CD8-positive, alpha-beta memory T cell (primary cell): ENCODE measurements at regions of chr7 and their contacts with region 1.

Region 1: DNA sequence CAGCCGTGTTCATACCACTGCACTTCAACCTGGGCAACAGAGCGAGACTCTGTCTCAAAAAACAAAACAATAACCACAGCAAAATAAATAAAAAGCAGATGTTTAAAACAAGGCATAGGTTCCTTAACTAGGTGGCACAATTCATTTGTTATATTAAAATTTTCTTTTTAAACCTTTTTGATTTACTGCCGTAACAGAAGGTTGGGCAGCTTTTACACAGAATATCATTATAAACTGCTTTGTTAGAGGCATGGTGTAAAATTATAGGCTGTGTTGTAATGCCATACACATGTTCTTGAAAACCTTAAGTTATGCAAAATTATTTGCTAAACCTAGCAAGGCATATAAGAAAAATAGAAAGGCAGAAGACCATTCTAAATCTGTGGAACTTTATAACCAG is 84.4 kb downstream of the MKLN1 start:
- DNase-seq: no peak
- H3K4me3 ChIP-seq: no peak overlapping the region
- H3K4me3 Mint-ChIP-seq: no peak overlapping the region
- H3K27ac ChIP-seq: no peak overlapping the region
- H3K27ac Mint-ChIP-seq: no peak overlapping the region
- H3K4me1 ChIP-seq: no peaks in the 10 kb centered on the region
- H3K4me1 Mint-ChIP-seq: peaks cover 4 to 16% (median 8%) of the 10 kb centered on the region in 3 donors
- H3K27me3 ChIP-seq: no peaks in the 10 kb centered on the region
- H3K27me3 Mint-ChIP-seq: no peaks in the 10 kb centered on the region

Region 2: DNA sequence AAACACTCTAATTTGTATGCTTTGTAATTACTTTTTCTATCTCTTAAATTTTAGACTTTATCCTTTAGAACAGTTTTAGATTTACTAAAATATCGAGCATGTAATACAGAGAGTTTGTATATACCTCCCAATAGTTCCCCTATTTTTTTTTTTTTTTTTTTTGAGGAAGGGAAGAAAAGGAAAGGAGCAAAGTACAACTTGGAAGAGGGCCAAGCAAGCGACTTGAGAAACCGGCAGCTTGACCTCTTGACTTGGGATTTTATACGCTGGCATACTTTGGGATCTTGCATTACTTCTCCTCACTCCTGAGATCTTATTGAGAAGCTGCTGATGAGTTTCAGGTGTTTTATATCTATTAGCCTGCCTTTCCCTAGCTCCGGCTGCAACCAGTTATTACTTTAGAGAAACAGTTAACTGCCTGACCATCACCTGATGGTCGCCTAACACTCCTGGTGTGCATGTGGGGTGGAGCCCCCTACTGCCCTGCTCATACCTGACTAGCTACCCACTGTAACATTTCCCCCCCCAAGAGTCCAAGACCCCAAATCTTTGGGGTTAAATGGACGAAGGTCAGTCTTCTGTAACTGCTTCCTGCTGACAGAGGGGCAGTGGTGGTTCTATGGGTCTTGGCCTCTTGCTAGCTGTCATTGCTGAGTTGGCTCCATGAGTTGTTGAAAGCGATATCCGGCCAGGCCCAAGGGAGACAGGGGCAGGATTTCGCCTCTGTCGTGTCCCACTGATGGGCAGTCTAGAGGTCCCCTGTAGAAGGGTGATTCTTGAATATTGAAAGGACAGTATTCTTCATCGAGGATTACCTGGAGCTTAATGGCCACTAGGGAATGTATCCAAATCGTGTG is 55.9 kb before region 1 on chr7:
- CTCF ChIA-PET with region 1: no interaction called
- POLR2A ChIA-PET with region 1: interaction called, 12 read pairs
- DNase-seq: no peak
- H3K4me3 ChIP-seq: no peak overlapping the region
- H3K4me3 Mint-ChIP-seq: no peak overlapping the region
- H3K27ac ChIP-seq: no peak overlapping the region
- H3K27ac Mint-ChIP-seq: peak overlapping the region in 1 of 8 donors; percentile 41
- H3K4me1 ChIP-seq: peaks cover 37% of the 10 kb centered on the region
- H3K4me1 Mint-ChIP-seq: peaks cover 71 to 89% (median 86%) of the 10 kb centered on the region in 3 donors
- H3K27me3 ChIP-seq: no peaks in the 10 kb centered on the region
- H3K27me3 Mint-ChIP-seq: no peaks in the 10 kb centered on the region

Region 3: DNA sequence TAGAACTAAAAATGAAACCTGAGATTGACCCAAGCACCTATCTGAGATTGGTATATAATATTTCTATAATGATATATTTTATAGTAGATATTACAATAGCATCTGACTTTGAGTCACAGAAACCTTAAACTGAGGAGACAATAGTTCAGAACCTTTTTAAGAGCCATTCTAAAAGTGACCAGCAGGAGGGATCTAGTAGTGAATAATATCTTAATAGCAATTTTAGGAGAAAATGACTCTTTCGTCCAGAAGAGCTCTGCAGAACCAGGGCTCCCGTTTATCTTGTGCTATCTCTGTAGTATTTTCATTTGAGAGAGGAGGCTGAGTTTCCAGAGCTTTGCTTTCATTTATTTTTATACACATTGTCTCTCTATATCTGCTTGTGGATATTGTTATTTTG is 76.3 kb after region 1 on chr7:
- CTCF ChIA-PET with region 1: no interaction called
- POLR2A ChIA-PET with region 1: no interaction called
- DNase-seq: no peak
- H3K4me3 ChIP-seq: no peak overlapping the region
- H3K4me3 Mint-ChIP-seq: no peak overlapping the region
- H3K27ac ChIP-seq: no peak overlapping the region
- H3K27ac Mint-ChIP-seq: peak overlapping the region in 2 of 8 donors; percentile 36 to 50
- H3K4me1 ChIP-seq: no peaks in the 10 kb centered on the region
- H3K4me1 Mint-ChIP-seq: peaks cover 0 to 4% (median 0%) of the 10 kb centered on the region in 3 donors
- H3K27me3 ChIP-seq: no peaks in the 10 kb centered on the region
- H3K27me3 Mint-ChIP-seq: no peaks in the 10 kb centered on the region